ENCODE measurements at regions of chr14 and their contacts with region 1.

Region 1: DNA sequence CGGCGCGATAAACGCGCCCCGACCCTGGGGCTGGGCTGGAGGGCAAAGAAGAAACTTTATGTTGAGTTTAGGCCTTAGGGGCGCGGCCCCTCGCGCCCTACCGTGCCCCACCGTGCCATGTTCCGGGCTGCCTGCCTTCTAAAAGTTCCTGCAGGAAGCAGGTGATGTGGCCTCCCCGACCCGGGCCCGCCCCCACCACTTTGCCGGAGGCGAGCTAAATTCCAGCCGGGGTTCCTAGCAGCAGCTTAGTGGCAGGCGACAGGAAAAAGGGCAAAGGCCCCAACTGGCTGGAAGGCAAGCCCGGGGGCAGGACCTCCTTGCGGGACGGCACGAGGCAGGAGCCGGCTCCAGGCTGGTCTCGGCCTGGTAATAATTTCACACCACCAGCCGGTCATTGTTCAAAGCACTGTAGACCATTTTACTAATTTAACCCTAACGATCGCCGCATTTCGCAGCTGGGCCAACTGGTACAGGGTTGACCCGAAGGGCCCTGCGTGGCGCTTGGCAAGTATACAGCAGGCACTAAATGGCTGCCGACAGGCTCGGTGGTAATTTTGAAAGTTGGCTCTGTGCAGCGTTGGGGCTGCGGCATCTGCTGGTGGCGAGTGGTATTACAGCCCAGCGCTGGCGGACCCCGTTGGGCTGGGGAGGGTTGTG is 895 bp upstream of the CCDC88C start:
- DNase-seq: peak; percentile 94
- H3K4me3 ChIP-seq: peak overlapping the region; percentile 27 to 97 (median 94)
- H3K27ac ChIP-seq: peak overlapping the region; percentile 3 to 94 (median 83)
- H3K4me1 ChIP-seq: peaks cover 19 to 65% (median 48%) of the 10 kb centered on the region in 6 donors
- H3K27me3 ChIP-seq: no peaks in the 10 kb centered on the region
- CTCF ChIP-seq: peak; percentile 89 to 99 (median 98)
- POLR2A ChIP-seq: no peak

Region 2: GRCh38 chr14:91177073-91178034 is 241.2 kb before region 1 on chr14:
- intact Hi-C with region 1: no loop called
- DNase-seq: peak; percentile 84
- H3K4me3 ChIP-seq: no peak overlapping the region
- H3K27ac ChIP-seq: peak overlapping the region in 7 of 8 donors; percentile 24 to 78 (median 61)
- H3K4me1 ChIP-seq: peaks cover 5 to 26% (median 14%) of the 10 kb centered on the region in 6 donors
- H3K27me3 ChIP-seq: no peaks in the 10 kb centered on the region
- CTCF ChIP-seq: peak; percentile 68 to 88 (median 81)
- POLR2A ChIP-seq: no peak

Region 3: GRCh38 chr14:91324606-91325575 is 93.6 kb before region 1 on chr14:
- intact Hi-C with region 1: loop called (anchors 5 kb)
- DNase-seq: peak; percentile 83
- H3K4me3 ChIP-seq: peak overlapping the region in 2 of 8 donors; percentile 39 to 65
- H3K27ac ChIP-seq: peak overlapping the region; percentile 84 to 96 (median 90)
- H3K4me1 ChIP-seq: peaks cover 25 to 98% (median 61%) of the 10 kb centered on the region in 6 donors
- H3K27me3 ChIP-seq: no peaks in the 10 kb centered on the region
- CTCF ChIP-seq: no peak
- POLR2A ChIP-seq: no peak

Region 4: GRCh38 chr14:91367173-91368171 is 51.0 kb before region 1 on chr14:
- intact Hi-C with region 1: loop called (anchors 10 kb)
- DNase-seq: no peak
- H3K4me3 ChIP-seq: peak overlapping the region in 1 of 8 donors; percentile 41
- H3K27ac ChIP-seq: peak overlapping the region in 7 of 8 donors; percentile 29 to 86 (median 70)
- H3K4me1 ChIP-seq: peaks cover 72 to 100% (median 98%) of the 10 kb centered on the region in 6 donors
- H3K27me3 ChIP-seq: no peaks in the 10 kb centered on the region
- CTCF ChIP-seq: no peak
- POLR2A ChIP-seq: no peak